ENCODE measurements at regions of chr17 and their contacts with region 1.

Region 1: DNA sequence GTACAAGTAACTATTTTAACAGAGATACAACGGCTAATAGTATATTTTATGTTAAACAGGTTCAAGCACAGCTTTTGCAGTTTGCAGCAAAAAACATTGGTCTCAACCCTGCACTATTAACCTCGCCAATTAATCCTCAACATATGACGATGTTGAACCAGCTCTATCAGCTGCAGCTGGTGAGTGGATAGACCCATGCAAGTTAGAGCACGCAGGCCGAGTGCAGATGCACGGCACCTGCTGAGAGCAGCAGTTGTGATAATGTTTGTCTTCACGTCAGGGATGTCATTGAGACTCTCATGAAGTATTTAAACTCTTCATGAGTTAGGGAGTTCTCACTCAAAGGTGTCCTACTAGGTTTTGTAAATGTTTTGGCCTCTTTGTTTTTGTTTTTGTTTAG is 45.6 kb downstream of the TMC6 start:
- DNase-seq: no peak
- H3K4me3 ChIP-seq: no peak overlapping the region
- H3K27me3 ChIP-seq: no peaks in the 10 kb centered on the region
- CTCF ChIP-seq: no peak

Region 2: DNA sequence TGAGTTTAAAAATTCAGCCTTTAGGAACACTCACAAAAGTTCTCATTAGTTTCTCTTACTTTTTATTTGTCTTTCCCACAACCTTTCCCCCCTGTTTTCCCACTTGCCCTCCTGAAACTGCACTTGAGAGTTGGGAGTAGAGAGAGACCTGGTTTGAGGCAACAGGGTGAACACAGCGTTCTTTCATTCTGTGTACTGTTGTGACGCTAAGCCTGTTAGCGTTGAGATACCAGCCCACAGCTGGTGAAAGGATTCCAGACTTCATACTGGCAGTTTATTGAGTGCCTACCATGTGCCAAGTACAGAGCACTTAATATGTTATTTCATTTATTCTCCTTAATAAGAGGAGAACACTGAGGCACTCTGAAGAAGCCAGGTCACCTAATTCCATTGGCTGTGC is 114.2 kb before region 1 on chr17:
- CTCF ChIA-PET with region 1: no interaction called
- POLR2A ChIA-PET with region 1: no interaction called
- DNase-seq: no peak
- H3K4me3 ChIP-seq: no peak overlapping the region
- H3K27me3 ChIP-seq: no peaks in the 10 kb centered on the region
- CTCF ChIP-seq: no peak

Region 3: GRCh38 chr17:78069695-78070094 is 13.3 kb before region 1 on chr17:
- CTCF ChIA-PET with region 1: interaction called, 12 read pairs
- POLR2A ChIA-PET with region 1: no interaction called
- DNase-seq: no peak
- H3K4me3 ChIP-seq: no peak overlapping the region
- H3K27me3 ChIP-seq: no peaks in the 10 kb centered on the region
- CTCF ChIP-seq: no peak

Region 4: DNA sequence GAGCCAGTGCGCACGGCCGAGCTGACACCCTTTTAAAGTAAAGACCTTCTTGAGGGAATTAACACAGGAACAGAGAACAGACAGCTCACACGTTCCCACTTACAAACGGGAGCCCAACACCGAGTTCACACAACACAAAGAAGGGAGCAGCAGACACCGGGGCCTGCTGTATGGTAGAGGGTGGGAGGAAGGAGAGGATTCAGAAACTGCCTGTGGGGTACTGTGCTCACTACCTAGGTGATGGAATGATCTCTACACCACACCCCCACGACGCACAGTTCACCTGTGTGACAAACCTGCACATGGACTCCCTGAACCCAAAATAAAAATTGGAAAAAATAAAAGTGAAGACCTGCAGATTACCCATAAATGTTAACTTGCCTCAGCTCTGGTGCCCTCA is 13.1 kb after region 1 on chr17:
- CTCF ChIA-PET with region 1: interaction called, 24 read pairs
- POLR2A ChIA-PET with region 1: no interaction called
- DNase-seq: no peak
- H3K4me3 ChIP-seq: no peak overlapping the region
- H3K27me3 ChIP-seq: no peaks in the 10 kb centered on the region
- CTCF ChIP-seq: no peak

Measured in BJ (cell line).